Ovary (tissue), 10 donors: ENCODE measurements at regions of chr6 and their contacts with region 1.

Region 1: DNA sequence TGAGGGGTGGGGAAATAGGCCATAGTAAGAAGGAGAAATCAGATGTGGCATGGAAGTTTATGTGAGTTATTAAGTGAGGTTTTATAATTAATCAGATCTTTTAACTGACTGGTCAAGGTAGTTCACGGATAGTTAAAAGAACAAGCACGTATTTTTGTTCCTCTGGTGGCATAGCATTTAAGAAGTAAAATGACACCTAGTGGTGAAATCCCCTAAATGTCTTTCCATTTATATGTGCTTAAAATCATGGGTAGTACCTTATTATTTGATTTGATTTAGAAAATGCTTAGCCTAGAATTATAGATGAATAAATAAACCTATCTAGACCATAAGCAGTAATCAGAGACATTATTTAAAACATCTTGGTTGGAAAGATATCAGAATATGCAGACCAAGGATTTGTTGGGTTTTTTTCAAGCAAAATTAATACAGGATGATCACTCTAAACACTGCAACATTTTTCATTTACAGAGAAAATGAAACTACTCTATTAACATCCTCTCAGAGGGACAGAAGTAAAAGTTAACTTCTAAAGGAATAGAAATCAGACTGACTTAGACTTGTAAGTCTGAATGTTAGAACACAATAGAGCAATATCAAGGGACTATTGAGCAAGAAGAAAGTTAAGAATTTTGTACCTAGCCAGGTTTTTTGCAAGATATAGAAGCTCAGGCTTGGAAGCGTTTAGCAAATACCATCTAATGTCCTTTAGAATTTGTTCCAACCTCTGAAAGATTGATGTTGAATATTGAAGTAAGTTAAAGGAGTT is 81.1 kb downstream of the STXBP5 start:
- DNase-seq: no peak
- H3K4me3 ChIP-seq: no peak overlapping the region
- H3K27ac ChIP-seq: no peak overlapping the region
- H3K4me1 ChIP-seq: no peaks in the 10 kb centered on the region
- H3K27me3 ChIP-seq: no peaks in the 10 kb centered on the region
- CTCF ChIP-seq: peak in 1 of 3 donors; percentile 27
- EP300 ChIP-seq: no peak
- POLR2A ChIP-seq: no peak

Region 2: DNA sequence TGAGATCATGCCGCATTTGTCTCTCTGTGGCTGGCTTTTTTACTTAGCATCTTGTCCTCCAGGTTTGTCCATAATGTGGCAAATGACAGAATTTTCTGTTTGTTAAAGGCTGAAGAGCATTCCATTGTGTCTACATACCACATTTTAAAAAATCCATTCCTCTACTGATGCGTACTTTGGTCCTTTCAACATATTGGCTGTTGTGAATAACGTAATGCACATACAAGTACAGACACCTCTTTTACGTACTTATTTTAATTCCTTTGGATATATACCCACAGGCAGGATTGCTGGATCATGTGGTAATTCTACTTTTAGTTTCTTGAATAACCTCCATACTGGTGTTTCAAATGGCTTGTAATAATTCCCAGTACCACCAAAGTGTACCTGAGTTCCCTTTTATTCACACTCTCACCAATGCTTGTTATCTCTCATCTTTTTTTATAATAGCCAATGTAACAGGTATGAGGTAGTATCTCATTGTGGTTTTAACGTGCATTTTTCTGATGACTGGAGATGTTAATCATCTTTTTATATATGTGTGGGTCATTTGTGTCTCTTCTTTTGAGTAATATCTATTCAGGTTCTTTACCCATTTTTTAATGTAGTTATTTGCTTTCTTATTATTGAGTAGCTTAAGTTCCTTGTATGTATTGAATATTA is 494.7 kb before region 1 on chr6:
- intact Hi-C with region 1: no loop called
- DNase-seq: no peak
- H3K4me3 ChIP-seq: no peak overlapping the region
- H3K27ac ChIP-seq: no peak overlapping the region
- H3K4me1 ChIP-seq: no peaks in the 10 kb centered on the region
- H3K27me3 ChIP-seq: no peaks in the 10 kb centered on the region
- CTCF ChIP-seq: no peak
- EP300 ChIP-seq: no peak
- POLR2A ChIP-seq: no peak

Region 3: DNA sequence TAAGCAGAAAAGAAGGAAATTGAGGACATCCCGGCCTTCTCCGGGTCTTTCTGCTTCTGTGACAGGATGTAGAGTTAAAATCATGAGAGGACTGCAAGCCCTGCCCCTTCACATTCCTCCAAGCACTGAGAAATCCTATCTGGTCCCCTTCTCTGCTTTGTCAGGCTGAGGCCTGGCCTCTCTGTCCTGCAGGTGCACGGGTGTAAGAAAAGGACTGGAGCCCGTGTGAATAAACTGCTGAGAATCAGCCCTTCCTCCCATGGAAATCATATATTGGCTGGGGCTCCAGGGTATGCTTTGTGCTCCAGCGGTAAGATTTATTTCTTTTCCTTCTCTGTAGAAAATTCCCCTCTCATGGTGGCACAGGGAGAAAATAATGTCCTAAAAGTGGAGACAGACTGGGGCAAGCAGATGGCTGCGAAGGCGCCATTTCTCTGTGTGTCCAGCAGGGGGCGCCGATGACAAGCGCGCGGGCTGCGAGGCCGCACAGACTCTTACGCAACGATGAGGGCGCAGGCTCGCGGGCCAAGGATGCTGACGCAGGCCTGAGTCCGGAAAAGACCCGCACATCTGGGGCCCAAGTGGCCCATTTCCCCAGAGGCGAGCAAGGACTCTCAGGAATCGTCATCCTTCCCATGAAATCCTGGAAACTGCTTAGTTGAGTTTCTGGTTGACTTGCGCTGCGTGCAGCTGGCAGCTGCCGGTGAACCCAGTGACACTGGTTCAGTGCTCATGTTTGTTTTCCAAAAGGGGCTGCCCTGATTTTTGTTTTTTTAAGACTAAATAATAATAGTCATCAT is 427.9 kb before region 1 on chr6:
- intact Hi-C with region 1: loop called in 2 of 4 experiments (anchors 10 kb)
- DNase-seq: peak; percentile 86 to 94 (median 92)
- H3K4me3 ChIP-seq: peak overlapping the region; percentile 36
- H3K27ac ChIP-seq: peak overlapping the region; percentile 69 to 83
- H3K4me1 ChIP-seq: no peaks in the 10 kb centered on the region
- H3K27me3 ChIP-seq: no peaks in the 10 kb centered on the region
- CTCF ChIP-seq: peak; percentile 92 to 100 (median 99)
- EP300 ChIP-seq: peak; percentile 64
- POLR2A ChIP-seq: no peak